HEK293T (cell line): ENCODE measurements at regions of chr22 and their contacts with region 1.

Region 1: GRCh38 chr22:17400305-17400704 is 31.0 kb downstream of the CECR2 start:
- DNase-seq: no peak

Region 2: GRCh38 chr22:17375914-17376614 is 24.2 kb before region 1 on chr22:
- CTCF ChIA-PET with region 1: no interaction called
- POLR2A ChIA-PET with region 1: no interaction called
- DNase-seq: no peak

Region 3: DNA sequence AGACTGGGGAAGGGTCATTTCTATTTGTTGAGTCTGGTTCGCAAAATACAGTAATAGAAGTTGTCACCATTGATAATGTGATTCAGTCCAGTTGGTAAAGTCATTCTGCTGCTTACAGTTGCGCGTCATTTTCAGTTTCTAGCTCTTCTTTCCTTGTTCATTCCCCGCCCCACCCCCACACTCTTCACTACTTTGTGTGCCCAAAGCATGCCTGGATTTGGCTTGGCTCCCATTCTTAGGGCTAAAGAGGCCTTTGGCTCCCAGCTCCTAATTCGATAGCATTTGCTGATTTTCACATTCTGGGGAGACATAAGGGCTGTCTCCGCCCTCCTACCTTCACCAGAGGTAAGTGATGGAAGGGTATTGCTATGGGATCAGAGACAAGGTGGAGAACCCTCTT is 11.9 kb after region 1 on chr22:
- CTCF ChIA-PET with region 1: interaction called, 10 read pairs
- POLR2A ChIA-PET with region 1: no interaction called
- DNase-seq: no peak

Region 4: GRCh38 chr22:17422736-17423343 is 22.5 kb after region 1 on chr22:
- CTCF ChIA-PET with region 1: no interaction called
- POLR2A ChIA-PET with region 1: no interaction called
- DNase-seq: no peak

Region 5: GRCh38 chr22:17443405-17444203 is 43.3 kb after region 1 on chr22:
- CTCF ChIA-PET with region 1: no interaction called
- POLR2A ChIA-PET with region 1: no interaction called
- DNase-seq: no peak